ENCODE measurements at regions of chr15 and their contacts with region 1.

Region 1: DNA sequence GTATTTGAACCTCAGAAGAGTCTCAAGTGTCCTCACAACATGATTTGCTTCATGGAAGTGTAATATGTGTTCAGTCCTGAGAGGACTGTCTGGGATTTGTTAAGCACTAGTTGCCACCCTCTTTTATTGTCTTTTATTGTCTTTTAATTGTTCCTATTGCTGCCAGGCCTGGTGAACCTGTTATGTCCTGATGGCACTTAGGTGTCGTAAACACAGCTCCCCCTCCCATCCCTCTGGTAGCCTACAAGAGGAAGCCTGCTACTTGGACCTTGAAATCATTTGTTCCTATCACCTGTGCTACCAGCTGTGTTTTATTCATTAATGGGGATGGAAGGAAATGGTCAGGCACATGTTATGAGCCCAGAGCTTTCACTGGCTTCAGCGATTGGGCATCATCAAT is 19.3 kb downstream of the CCNB2 start:
- DNase-seq: no peak
- CTCF ChIP-seq: no peak

Region 2: DNA sequence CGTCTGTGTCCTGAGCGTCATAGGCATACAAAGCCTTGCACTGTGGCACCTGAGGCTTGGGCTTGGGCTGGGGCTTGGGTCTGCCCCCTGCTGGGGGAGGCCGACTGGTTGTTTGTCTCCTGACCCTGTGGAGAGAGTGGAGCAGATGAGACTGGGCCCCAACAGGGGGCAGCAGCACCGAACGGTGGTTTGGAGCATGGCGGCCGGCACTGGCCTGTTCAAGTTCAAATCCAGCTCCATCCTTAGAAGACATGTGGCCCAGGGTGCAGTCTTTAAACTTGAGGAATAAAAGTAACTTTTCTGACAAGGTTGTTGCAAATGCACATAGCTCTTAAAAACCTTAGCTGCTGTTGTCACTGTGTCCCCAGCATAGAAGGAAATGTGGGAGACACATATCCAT is 14.0 kb after region 1 on chr15:
- CTCF ChIA-PET with region 1: interaction called, 21 read pairs
- POLR2A ChIA-PET with region 1: no interaction called
- DNase-seq: peak; percentile 75
- CTCF ChIP-seq: peak; percentile 56

Region 3: GRCh38 chr15:59160880-59161593 is 36.8 kb after region 1 on chr15:
- CTCF ChIA-PET with region 1: no interaction called
- POLR2A ChIA-PET with region 1: no interaction called
- DNase-seq: no peak
- CTCF ChIP-seq: peak; percentile 39

Region 4: DNA sequence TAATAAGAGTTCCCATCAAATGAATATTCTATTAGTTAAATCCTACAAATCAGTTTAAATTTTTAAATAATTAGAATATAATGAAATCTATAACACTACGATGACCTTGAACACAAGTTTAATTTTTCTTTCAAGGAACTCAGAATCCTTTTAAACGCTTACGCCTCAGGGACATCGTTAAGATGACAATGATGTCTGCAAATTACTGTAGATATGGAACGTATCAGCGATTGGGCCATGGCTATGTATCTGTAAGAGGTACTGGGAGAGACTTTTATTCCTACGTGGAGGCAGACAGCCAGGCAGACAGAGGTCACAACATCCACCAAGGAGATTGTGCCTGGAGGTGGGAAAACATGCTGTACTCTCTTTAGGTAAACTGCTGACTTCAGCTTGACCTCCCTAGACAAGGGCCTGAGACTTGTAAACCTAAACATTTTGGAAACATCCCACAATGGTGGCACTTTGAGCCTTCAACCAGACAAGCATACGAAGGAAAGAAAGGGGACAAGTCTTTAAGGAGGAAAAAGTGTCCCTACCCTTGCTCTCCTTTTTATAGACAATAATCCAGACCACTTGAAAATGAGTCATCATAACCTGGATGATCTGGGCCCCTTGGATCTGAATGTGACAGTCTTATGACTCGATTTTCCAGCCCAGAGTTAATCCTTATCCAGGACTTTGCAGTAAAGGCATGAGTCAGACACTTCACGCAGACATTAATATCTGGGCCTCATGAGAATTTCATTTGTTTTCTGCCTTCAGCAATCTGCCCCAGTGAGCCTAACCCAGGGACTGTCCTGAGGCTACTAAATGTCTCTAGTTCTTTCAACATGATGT is 75.6 kb after region 1 on chr15:
- CTCF ChIA-PET with region 1: no interaction called
- POLR2A ChIA-PET with region 1: no interaction called
- DNase-seq: no peak
- CTCF ChIP-seq: no peak

Measured in GM10248 (cell line).